Activated CD4-positive, alpha-beta T cell treated with anti-CD3 and anti-CD28 coated beads for 36 hours (primary cell): ENCODE measurements at regions of chr7 and their contacts with region 1.

Region 1: GRCh38 chr7:12322284-12322902 is 81.3 kb downstream of the VWDE start:
- DNase-seq: peak; percentile 7
- ATAC-seq: no peak
- H3K4me3 Mint-ChIP-seq: no peak overlapping the region
- H3K27ac Mint-ChIP-seq: no peak overlapping the region
- H3K4me1 Mint-ChIP-seq: no peaks in the 10 kb centered on the region
- H3K27me3 Mint-ChIP-seq: no peaks in the 10 kb centered on the region

Region 2: GRCh38 chr7:11373546-11374142 is 948.7 kb before region 1 on chr7:
- CTCF ChIA-PET with region 1: no interaction called
- POLR2A ChIA-PET with region 1: no interaction called
- intact Hi-C with region 1: loop called in 1 of 2 experiments (anchors 5 kb)
- DNase-seq: no peak
- ATAC-seq: no peak
- H3K4me3 Mint-ChIP-seq: no peak overlapping the region
- H3K27ac Mint-ChIP-seq: no peak overlapping the region
- H3K4me1 Mint-ChIP-seq: no peaks in the 10 kb centered on the region
- H3K27me3 Mint-ChIP-seq: no peaks in the 10 kb centered on the region

Region 3: DNA sequence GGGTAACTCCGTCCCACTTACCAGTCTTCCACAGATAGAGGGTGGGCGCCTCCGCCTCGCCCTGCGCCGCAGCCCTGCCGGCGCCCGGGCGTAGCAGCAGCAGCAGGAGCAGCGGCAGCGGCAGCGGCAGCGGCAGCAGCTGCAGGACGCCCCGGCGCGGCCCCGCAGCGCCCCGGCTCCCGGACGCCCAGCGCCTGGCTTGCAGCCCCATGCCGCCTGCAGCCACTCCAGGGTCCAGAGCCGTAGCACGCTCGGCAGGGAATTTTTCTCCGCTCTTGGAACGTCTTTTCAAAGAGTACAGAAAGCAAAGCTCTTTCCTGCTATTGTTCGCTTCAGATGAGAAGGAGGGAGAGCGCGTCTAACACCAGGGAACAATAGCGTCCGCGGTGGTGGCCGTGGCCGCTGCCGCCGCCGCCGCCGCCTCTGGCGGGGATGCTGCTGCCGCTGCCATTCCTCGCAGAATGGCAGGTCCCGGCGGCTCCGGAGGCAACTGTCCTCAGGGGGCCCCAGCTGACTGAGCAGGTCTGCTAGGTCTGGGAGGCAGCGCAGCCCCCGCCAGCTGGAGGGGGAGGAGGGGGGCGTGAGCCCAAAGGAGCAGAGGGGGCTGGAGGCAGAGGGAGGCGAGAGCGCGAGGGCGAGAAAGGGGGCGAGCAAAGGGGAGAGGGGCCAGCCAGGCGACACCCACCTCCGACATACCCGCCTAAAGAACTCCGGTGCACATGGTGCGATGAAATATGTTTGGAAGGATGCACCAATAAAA is 490.5 kb before region 1 on chr7 and contains the start of gene THSD7A:
- CTCF ChIA-PET with region 1: no interaction called
- POLR2A ChIA-PET with region 1: no interaction called
- intact Hi-C with region 1: loop called (anchors 5 kb)
- DNase-seq: peak; percentile 27
- ATAC-seq: peak; percentile 55
- H3K4me3 Mint-ChIP-seq: peak within 1 kb of the TSS; percentile 15
- H3K27ac Mint-ChIP-seq: no peak within 1 kb of the TSS
- H3K4me1 Mint-ChIP-seq: peaks cover 13% of the 10 kb centered on the region
- H3K27me3 Mint-ChIP-seq: peaks cover 41% of the 10 kb centered on the region
- total RNA-seq, gene THSD7A: not detected

Region 4: GRCh38 chr7:11960621-11961020 is 361.8 kb before region 1 on chr7:
- CTCF ChIA-PET with region 1: no interaction called
- POLR2A ChIA-PET with region 1: no interaction called
- intact Hi-C with region 1: no loop called
- DNase-seq: no peak
- ATAC-seq: no peak
- H3K4me3 Mint-ChIP-seq: no peak overlapping the region
- H3K27ac Mint-ChIP-seq: no peak overlapping the region
- H3K4me1 Mint-ChIP-seq: no peaks in the 10 kb centered on the region
- H3K27me3 Mint-ChIP-seq: no peaks in the 10 kb centered on the region

Region 5: GRCh38 chr7:12067141-12067831 is 255.1 kb before region 1 on chr7:
- CTCF ChIA-PET with region 1: interaction called, 18 read pairs
- POLR2A ChIA-PET with region 1: no interaction called
- intact Hi-C with region 1: loop called (anchors 1 kb)
- DNase-seq: peak; percentile 68
- ATAC-seq: peak; percentile 27
- H3K4me3 Mint-ChIP-seq: no peak overlapping the region
- H3K27ac Mint-ChIP-seq: no peak overlapping the region
- H3K4me1 Mint-ChIP-seq: peaks cover 19% of the 10 kb centered on the region
- H3K27me3 Mint-ChIP-seq: no peaks in the 10 kb centered on the region

Region 6: DNA sequence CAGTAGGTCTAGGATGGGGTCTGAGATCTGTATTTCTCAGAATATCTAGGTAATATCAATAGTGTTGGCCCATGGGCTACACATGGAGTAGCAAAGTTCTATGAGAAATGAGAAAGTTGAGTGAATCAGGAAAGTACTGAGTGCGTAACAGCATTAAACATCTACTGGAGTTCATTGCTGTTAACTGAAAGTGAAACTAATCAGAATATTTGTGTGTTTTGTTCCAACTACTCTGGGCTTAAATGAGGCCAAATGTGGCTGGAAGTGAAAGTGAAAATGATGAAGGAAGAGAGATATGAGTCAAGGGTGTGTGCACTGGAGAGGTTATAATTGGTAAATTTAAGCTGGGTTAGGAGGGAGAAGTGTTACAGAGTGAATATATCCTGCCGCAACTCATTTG is 64.8 kb before region 1 on chr7:
- CTCF ChIA-PET with region 1: no interaction called
- POLR2A ChIA-PET with region 1: no interaction called
- intact Hi-C with region 1: loop called in 1 of 2 experiments (anchors 5 kb)
- DNase-seq: peak; percentile 30
- ATAC-seq: peak; percentile 95
- H3K4me3 Mint-ChIP-seq: no peak overlapping the region
- H3K27ac Mint-ChIP-seq: no peak overlapping the region
- H3K4me1 Mint-ChIP-seq: peaks cover 8% of the 10 kb centered on the region
- H3K27me3 Mint-ChIP-seq: no peaks in the 10 kb centered on the region